Activated CD4-positive, alpha-beta T cell treated with anti-CD3 and anti-CD28 coated beads, Interleukin-2, amount 10 ng/mL, durations not matched to agents 7 days and 5 days (primary cell): ENCODE measurements at regions of chr9 and their contacts with region 1.

Region 1: DNA sequence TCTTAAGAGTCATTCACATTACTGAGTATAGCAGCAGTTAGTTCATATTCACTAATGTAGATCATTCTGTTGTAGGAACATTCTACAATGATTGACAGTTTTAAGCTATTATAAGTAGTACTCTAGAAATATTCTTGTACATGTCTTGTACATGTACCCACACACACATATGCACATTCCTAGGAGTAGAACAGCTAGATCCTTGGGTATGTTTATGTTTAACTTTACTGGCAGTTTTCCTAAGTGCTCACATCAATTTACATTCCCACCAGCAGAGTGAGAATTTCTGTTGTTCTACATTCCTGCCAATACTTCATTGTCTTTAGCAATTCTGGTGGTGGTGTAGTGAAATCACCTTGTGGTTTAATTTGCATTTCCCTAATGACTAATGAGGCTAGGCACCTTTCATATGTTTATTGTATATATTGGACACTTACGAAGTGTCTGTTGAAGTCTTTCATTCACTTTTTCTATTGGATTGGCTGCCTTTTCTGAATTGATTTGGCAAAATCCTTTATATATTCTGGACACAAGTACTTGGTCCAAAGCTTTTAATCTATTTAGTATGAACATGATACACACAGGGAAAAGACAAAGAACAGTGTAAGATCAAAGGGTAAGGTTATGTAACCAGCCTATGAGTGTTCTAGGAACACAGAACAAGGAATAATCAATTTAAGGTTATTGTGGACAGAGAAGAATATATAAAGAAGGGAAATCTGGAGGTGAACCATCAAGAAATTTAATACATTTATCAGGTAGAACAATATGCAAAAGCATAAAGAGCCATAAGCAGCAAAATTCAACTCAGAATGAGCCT is 95.6 kb downstream of the MLLT3 start:
- DNase-seq: no peak
- H3K4me3 Mint-ChIP-seq: no peak overlapping the region
- H3K27ac Mint-ChIP-seq: no peak overlapping the region
- H3K4me1 Mint-ChIP-seq: peaks cover 80% of the 10 kb centered on the region
- H3K27me3 Mint-ChIP-seq: no peaks in the 10 kb centered on the region

Region 2: DNA sequence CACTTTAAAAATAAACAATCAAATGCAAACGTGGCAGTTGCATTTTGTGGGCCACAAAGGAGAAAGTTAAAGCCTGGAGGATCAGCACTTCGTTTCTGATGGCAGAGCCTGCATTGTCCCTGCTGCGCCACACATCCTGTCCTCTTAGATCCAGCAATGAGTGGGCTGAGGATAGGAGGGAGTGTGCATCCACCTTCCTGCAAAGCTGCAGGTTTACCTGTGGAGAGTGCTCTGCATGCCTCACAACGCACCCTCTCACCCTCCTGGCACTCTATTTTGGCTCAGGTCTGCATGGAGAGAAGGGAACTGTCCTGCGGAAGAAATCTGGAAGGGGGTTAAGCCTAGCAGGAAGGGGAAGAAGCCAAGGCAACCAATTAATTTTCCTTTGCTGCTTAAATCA is 525.7 kb before region 1 on chr9:
- CTCF ChIA-PET with region 1: no interaction called
- POLR2A ChIA-PET with region 1: interaction called, 12 read pairs
- DNase-seq: no peak
- H3K4me3 Mint-ChIP-seq: no peak overlapping the region
- H3K27ac Mint-ChIP-seq: no peak overlapping the region
- H3K4me1 Mint-ChIP-seq: peaks cover 39% of the 10 kb centered on the region
- H3K27me3 Mint-ChIP-seq: no peaks in the 10 kb centered on the region